ENCODE measurements at regions of chr9 and their contacts with region 1.

Region 1: GRCh38 chr9:126860077-126860756 is at the start of gene ZBTB34:
- DNase-seq: peak; percentile 74
- H3K4me3 Mint-ChIP-seq: peak within 1 kb of the TSS; percentile 89
- H3K27ac Mint-ChIP-seq: peak within 1 kb of the TSS; percentile 84
- H3K4me1 Mint-ChIP-seq: peaks cover 24% of the 10 kb centered on the region
- H3K27me3 Mint-ChIP-seq: peaks cover 12% of the 10 kb centered on the region
- total RNA-seq, gene ZBTB34: 7.5 and 8.5 TPM in 2 replicates

Region 2: DNA sequence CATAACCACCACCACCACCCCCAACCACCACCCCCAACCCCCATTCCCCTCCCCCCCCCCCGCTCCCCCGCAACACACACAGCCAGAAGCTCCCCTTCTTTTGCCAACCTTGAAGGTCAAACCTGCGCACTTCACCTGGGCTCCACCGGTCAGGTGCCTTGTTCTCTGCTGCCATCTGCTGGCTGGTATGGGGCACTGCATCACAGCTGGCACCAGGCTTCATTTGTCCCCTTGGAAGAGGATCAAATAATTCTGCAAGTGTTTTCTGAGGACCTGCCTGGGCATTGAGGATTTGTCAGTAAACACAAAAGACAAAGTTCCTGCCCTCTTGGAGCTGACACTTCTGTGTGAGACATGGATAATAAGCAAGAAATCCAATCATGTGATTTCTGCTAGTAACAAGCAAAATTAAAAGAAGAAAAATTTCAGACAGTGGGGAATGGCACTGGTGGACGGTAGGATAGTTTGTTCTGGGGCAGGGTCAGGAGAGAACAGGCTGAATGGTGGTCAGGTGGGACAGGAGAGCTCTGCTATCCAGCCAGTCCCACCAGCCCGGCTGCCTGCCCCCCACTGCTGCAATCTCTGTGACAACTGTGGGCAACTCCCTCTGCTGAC is 302.1 kb before region 1 on chr9:
- intact Hi-C with region 1: no loop called
- DNase-seq: peak; percentile 49
- H3K4me3 Mint-ChIP-seq: no peak overlapping the region
- H3K27ac Mint-ChIP-seq: no peak overlapping the region
- H3K4me1 Mint-ChIP-seq: no peaks in the 10 kb centered on the region
- H3K27me3 Mint-ChIP-seq: peaks cover 8% of the 10 kb centered on the region

Region 3: GRCh38 chr9:126722252-126723078 is 137.8 kb before region 1 on chr9:
- intact Hi-C with region 1: loop called (anchors 2 kb)
- DNase-seq: peak; percentile 80
- H3K4me3 Mint-ChIP-seq: peak overlapping the region; percentile 88
- H3K27ac Mint-ChIP-seq: peak overlapping the region; percentile 74
- H3K4me1 Mint-ChIP-seq: peaks cover 35% of the 10 kb centered on the region
- H3K27me3 Mint-ChIP-seq: peaks cover 10% of the 10 kb centered on the region

Region 4: GRCh38 chr9:126819482-126819881 is 40.7 kb before region 1 on chr9:
- intact Hi-C with region 1: loop called (anchors 1 kb)
- DNase-seq: no peak
- H3K4me3 Mint-ChIP-seq: no peak overlapping the region
- H3K27ac Mint-ChIP-seq: peak overlapping the region; percentile 45
- H3K4me1 Mint-ChIP-seq: peaks cover 8% of the 10 kb centered on the region
- H3K27me3 Mint-ChIP-seq: no peaks in the 10 kb centered on the region

Region 5: GRCh38 chr9:126914458-126915280 is 54.5 kb after region 1 on chr9 and contains the start of gene RALGPS1:
- intact Hi-C with region 1: loop called (anchors 1 kb)
- DNase-seq: peak; percentile 91
- H3K4me3 Mint-ChIP-seq: peak within 1 kb of the TSS; percentile 73
- H3K27ac Mint-ChIP-seq: no peak within 1 kb of the TSS
- H3K4me1 Mint-ChIP-seq: peaks cover 6% of the 10 kb centered on the region
- H3K27me3 Mint-ChIP-seq: peaks cover 17% of the 10 kb centered on the region
- total RNA-seq, gene RALGPS1: 1.4 and 1.8 TPM in 2 replicates

Measured in activated T-helper 1 cell treated with anti-CD3 and anti-CD28 coated beads, Interleukin-12 subunit alpha, Interleukin-12 subunit beta, Interleukin-2, Interleukin-4 antibody, amounts not matched to agents 30 ng/mL and 10 ng/mL and 1 ng/mL, durations not matched to agents 14 hours and 24 hours and 36 hours (primary cell).